ENCODE measurements at regions of chr2 and their contacts with region 1.

Region 1: GRCh38 chr2:181104512-181105115 is 124.2 kb downstream of the UBE2E3 start:
- DNase-seq: no peak
- H3K4me3 ChIP-seq: no peak overlapping the region
- H3K27ac ChIP-seq: no peak overlapping the region
- H3K4me1 ChIP-seq: no peaks in the 10 kb centered on the region
- H3K27me3 ChIP-seq: no peaks in the 10 kb centered on the region
- CTCF ChIP-seq: peak in 2 of 3 experiments; percentile 24 to 42

Region 2: GRCh38 chr2:180630756-180631155 is 473.9 kb before region 1 on chr2:
- intact Hi-C with region 1: no loop called
- DNase-seq: no peak
- H3K4me3 ChIP-seq: no peak overlapping the region
- H3K27ac ChIP-seq: no peak overlapping the region
- H3K4me1 ChIP-seq: no peaks in the 10 kb centered on the region
- H3K27me3 ChIP-seq: no peaks in the 10 kb centered on the region
- CTCF ChIP-seq: no peak

Region 3: GRCh38 chr2:180901331-180901730 is 203.3 kb before region 1 on chr2:
- intact Hi-C with region 1: no loop called
- DNase-seq: no peak
- H3K4me3 ChIP-seq: no peak overlapping the region
- H3K27ac ChIP-seq: no peak overlapping the region
- H3K4me1 ChIP-seq: no peaks in the 10 kb centered on the region
- H3K27me3 ChIP-seq: no peaks in the 10 kb centered on the region
- CTCF ChIP-seq: no peak

Region 4: DNA sequence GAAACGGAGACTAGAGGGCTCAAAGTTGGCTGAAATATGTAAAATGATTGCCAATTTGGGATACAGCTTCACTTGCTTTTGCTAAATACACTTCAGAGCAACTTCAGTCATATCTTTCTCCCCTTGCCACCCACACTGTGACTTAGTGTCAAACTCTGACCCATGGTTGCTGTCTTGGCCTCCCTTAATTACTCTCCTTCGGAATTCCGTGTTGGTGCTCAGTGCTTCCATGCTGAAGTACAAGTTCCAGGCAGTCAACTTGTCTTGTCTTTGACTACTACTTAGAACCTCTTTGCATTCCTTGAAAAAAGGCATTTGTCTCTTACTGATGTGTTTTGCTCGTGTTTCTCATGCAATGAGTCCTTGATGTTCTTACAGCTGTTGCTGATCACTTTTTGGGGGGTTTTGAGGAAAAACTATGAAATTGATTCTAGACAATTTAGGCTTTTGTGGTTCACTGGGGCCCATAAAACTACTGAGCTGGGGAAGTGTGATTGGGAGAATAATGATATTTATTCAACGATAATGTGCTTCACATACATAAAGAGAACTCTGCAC is 21.8 kb after region 1 on chr2:
- intact Hi-C with region 1: loop called (anchors 1 kb)
- DNase-seq: no peak
- H3K4me3 ChIP-seq: no peak overlapping the region
- H3K27ac ChIP-seq: no peak overlapping the region
- H3K4me1 ChIP-seq: no peaks in the 10 kb centered on the region
- H3K27me3 ChIP-seq: no peaks in the 10 kb centered on the region
- CTCF ChIP-seq: no peak

Region 5: DNA sequence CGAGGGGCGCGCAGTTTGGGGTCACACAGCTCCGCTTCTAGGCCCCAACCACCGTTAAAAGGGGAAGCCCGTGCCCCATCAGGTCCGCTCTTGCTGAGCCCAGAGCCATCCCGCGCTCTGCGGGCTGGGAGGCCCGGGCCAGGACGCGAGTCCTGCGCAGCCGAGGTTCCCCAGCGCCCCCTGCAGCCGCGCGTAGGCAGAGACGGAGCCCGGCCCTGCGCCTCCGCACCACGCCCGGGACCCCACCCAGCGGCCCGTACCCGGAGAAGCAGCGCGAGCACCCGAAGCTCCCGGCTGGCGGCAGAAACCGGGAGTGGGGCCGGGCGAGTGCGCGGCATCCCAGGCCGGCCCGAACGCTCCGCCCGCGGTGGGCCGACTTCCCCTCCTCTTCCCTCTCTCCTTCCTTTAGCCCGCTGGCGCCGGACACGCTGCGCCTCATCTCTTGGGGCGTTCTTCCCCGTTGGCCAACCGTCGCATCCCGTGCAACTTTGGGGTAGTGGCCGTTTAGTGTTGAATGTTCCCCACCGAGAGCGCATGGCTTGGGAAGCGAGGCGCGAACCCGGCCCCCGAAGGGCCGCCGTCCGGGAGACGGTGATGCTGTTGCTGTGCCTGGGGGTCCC is 352.6 kb after region 1 on chr2 and contains the start of gene ITGA4:
- intact Hi-C with region 1: loop called (anchors 10 kb)
- DNase-seq: peak; percentile 9 to 80
- H3K4me3 ChIP-seq: peak within 1 kb of the TSS; percentile 52 to 64
- H3K27ac ChIP-seq: peak within 1 kb of the TSS; percentile 34 to 38
- H3K4me1 ChIP-seq: peaks cover 3 to 4% of the 10 kb centered on the region in 2 donors
- H3K27me3 ChIP-seq: no peaks in the 10 kb centered on the region
- CTCF ChIP-seq: peak; percentile 16 to 58 (median 37)
- total RNA-seq, gene ITGA4: 6.6 TPM